ENCODE measurements at regions of chr2 and their contacts with region 1.

Region 1: GRCh38 chr2:86518481-86518880 is 44.8 kb downstream of the CHMP3 start:
- DNase-seq: no peak
- ATAC-seq: peak in 1 of 4 donors; percentile 35
- H3K4me3 ChIP-seq: no peak overlapping the region
- H3K27ac ChIP-seq: no peak overlapping the region
- H3K4me1 ChIP-seq: peaks cover 17% of the 10 kb centered on the region
- H3K27me3 ChIP-seq: no peaks in the 10 kb centered on the region
- CTCF ChIP-seq: peak; percentile 23

Region 2: DNA sequence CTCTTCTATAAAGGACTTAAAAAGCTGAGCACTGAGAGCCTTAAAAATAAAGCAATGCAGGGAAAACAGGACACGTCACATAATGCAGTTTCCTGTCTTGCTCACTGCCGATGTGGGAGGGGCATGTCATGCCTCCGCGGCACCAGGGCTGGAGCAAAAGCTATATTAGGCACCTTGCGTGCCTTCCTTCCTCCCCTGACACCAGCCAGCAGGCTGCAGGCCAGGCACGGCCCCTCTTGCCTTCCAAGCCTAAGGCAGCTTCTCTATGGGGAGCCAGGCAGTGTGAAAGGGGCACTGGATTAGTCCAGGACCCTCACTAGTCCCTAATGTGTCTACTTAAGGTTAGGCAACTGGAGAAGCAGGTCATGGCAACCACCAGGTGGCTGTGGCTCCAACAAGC is 292.9 kb before region 1 on chr2:
- intact Hi-C with region 1: no loop called
- DNase-seq: peak; percentile 64 to 83
- ATAC-seq: peak; percentile 84 to 95 (median 92)
- H3K4me3 ChIP-seq: peak overlapping the region; percentile 48
- H3K27ac ChIP-seq: peak overlapping the region; percentile 89
- H3K4me1 ChIP-seq: peaks cover 42% of the 10 kb centered on the region
- H3K27me3 ChIP-seq: no peaks in the 10 kb centered on the region
- CTCF ChIP-seq: no peak

Region 3: DNA sequence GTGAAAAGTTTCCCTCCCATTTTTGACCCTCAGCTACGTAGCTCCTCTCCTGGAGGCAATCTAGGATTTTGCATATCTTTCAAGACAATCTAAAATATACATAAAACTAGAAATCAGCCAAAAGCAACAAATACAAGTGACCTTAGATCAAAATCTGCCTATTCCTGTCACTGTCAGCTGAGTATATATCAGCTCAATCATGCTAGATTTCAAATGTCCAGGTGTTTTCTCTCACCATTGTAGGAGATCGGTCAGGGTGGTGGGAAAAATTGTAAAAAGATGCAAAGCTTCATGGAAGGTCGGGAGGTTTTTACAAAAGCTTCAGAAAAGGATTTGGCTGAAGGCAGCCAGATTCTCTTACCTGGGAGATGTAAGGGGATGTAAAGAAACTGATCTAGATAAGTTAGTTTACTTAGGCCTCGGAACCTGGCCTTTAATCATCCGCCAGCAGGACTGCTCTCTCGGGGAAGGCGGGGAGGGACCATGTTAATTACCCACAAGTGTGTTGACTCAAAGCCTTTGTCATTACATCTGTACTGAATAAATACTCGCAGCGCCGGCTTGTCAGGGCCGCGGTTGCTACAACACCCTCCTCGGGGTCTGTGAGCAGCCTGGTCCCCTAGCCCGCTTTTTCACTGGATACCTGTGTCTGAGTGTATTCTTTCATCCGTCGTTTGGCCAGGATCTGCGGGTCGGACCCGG is 37.9 kb after region 1 on chr2:
- intact Hi-C with region 1: loop called in 1 of 2 experiments (anchors 5 kb)
- DNase-seq: no peak
- ATAC-seq: no peak
- H3K4me3 ChIP-seq: no peak overlapping the region
- H3K27ac ChIP-seq: no peak overlapping the region
- H3K4me1 ChIP-seq: peaks cover 12% of the 10 kb centered on the region
- H3K27me3 ChIP-seq: no peaks in the 10 kb centered on the region
- CTCF ChIP-seq: no peak

Region 4: GRCh38 chr2:86661333-86661732 is 142.9 kb after region 1 on chr2:
- intact Hi-C with region 1: no loop called
- DNase-seq: no peak
- ATAC-seq: no peak
- H3K4me3 ChIP-seq: no peak overlapping the region
- H3K27ac ChIP-seq: no peak overlapping the region
- H3K4me1 ChIP-seq: no peaks in the 10 kb centered on the region
- H3K27me3 ChIP-seq: no peaks in the 10 kb centered on the region
- CTCF ChIP-seq: no peak

Measured in psoas muscle (tissue), 8 donors.